B cell (primary cell): ENCODE measurements at regions of chr4 and their contacts with region 1.

Region 1: GRCh38 chr4:102799816-102800215 is 27.5 kb downstream of the UBE2D3 start:
- DNase-seq: no peak
- ATAC-seq: no peak
- H3K4me3 ChIP-seq: no peak overlapping the region
- H3K4me3 Mint-ChIP-seq: no peak overlapping the region
- H3K27ac ChIP-seq: peak overlapping the region in 1 of 2 donors; percentile 23
- H3K27ac Mint-ChIP-seq: no peak overlapping the region
- H3K4me1 ChIP-seq: no peaks in the 10 kb centered on the region
- H3K4me1 Mint-ChIP-seq: no peaks in the 10 kb centered on the region
- H3K27me3 ChIP-seq: no peaks in the 10 kb centered on the region
- H3K27me3 Mint-ChIP-seq: no peaks in the 10 kb centered on the region
- CTCF ChIP-seq: no peak

Region 2: DNA sequence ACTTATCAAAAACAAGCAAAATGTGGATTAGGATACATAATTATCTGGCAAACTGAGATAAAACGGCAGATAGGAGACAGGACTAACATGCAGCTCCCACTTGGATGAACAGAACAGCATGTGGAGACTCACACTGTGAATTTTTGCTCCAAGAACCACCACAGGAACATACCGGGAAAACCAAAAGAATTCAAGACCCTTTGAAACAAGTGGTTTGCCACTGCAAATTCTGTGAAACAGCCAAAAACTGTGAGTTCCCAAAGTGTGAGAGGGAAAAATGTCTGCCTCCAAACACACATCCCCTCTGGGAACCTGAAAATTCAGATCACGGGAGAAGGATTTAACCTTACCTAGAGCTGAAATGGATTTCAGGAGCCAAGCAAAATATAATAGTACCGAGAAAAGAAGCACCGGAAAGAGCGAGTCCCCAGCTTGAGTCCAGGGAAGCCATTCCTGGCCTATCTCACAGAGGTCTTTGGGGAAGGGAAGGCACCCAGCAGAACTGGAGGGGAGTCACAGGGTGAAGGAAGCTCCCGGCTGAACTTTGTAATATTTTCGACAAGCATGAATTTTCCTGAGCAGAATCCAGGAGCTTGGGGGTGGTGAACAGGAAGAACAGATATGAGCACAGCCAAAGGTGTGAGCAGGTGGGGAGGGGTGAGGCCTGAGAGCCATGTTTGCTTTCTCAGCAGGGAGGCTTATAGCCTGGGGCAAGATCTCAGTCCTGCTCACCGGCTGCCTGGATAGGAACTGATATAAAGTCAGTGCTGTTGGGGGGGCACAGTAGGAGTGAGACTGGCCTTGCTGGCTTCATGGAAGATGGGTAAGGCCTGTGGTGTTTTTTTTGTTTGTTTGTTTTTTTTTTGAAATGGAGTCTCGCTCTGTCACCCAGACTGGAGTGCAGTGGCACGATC is 62.9 kb before region 1 on chr4:
- CTCF ChIA-PET with region 1: no interaction called
- POLR2A ChIA-PET with region 1: no interaction called
- intact Hi-C with region 1: loop called (anchors 5 kb)
- DNase-seq: no peak
- ATAC-seq: no peak
- H3K4me3 ChIP-seq: no peak overlapping the region
- H3K4me3 Mint-ChIP-seq: no peak overlapping the region
- H3K27ac ChIP-seq: no peak overlapping the region
- H3K27ac Mint-ChIP-seq: no peak overlapping the region
- H3K4me1 ChIP-seq: peaks cover 10 to 15% of the 10 kb centered on the region in 2 donors
- H3K4me1 Mint-ChIP-seq: peaks cover 52% of the 10 kb centered on the region
- H3K27me3 ChIP-seq: no peaks in the 10 kb centered on the region
- H3K27me3 Mint-ChIP-seq: no peaks in the 10 kb centered on the region
- CTCF ChIP-seq: no peak